ENCODE measurements at regions of chr19 and their contacts with region 1.

Region 1: GRCh38 chr19:30784850-30785457 is 412.8 kb downstream of the ZNF536 start:
- H3K4me3 ChIP-seq: no peak overlapping the region
- H3K27ac ChIP-seq: no peak overlapping the region
- H3K4me1 ChIP-seq: no peaks in the 10 kb centered on the region
- CTCF ChIP-seq: peak; percentile 92

Region 2: GRCh38 chr19:30799865-30800755 is 15.2 kb after region 1 on chr19:
- CTCF ChIA-PET with region 1: interaction called, 90 read pairs
- POLR2A ChIA-PET with region 1: interaction called, 4 read pairs
- H3K4me3 ChIP-seq: no peak overlapping the region
- H3K27ac ChIP-seq: no peak overlapping the region
- H3K4me1 ChIP-seq: no peaks in the 10 kb centered on the region; the same call in 1 of the 2 replicates
- CTCF ChIP-seq: peak; percentile 91

Region 3: DNA sequence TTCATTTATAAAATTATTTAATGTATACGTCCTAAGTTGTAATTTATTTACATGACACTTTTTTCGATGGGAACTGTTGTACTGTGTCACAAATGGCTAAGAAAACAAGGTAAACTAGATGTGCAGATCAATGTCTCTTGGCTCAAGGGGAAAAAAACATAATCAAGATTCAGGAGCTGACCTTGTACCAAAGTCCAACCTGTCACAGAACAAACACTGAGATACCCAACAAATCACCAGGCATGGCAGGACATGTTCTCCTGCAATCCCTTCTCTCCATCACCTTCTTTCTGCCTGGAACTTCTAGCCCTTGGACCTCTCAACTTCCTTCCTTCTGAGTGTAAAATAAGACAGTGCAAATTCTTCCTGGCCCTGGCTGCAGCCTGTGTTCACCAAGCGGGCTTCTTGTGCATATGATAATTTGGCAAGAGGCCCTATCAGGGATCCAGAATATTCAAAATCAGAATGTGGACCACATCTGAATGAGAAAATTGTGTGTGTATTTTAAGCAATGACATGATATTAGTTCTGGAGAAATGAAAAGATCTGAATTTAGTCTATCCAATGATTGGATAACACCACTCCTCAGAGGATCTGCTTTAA is 33.1 kb after region 1 on chr19:
- CTCF ChIA-PET with region 1: interaction called, 14 read pairs
- POLR2A ChIA-PET with region 1: no interaction called
- H3K4me3 ChIP-seq: no peak overlapping the region
- H3K27ac ChIP-seq: no peak overlapping the region
- H3K4me1 ChIP-seq: no peaks in the 10 kb centered on the region
- CTCF ChIP-seq: no peak

Region 4: GRCh38 chr19:30846102-30846501 is 61.1 kb after region 1 on chr19:
- CTCF ChIA-PET with region 1: no interaction called
- POLR2A ChIA-PET with region 1: no interaction called
- H3K4me3 ChIP-seq: no peak overlapping the region
- H3K27ac ChIP-seq: no peak overlapping the region
- H3K4me1 ChIP-seq: 0 out of 2 replicates have a peak, but pooled peaks cover 2% of the 10 kb centered on the region
- CTCF ChIP-seq: no peak